Activated CD4-positive, alpha-beta memory T cell treated with anti-CD3 and anti-CD28 coated beads, Interleukin-2, amount 10 ng/mL, durations not matched to agents 7 days and 5 days (primary cell): ENCODE measurements at regions of chr2 and their contacts with region 1.

Region 1: GRCh38 chr2:105521205-105521604 is 122.4 kb upstream of the FHL2 start:
- DNase-seq: no peak
- H3K4me3 Mint-ChIP-seq: no peak overlapping the region
- H3K27ac Mint-ChIP-seq: no peak overlapping the region
- H3K4me1 Mint-ChIP-seq: no peaks in the 10 kb centered on the region
- H3K27me3 Mint-ChIP-seq: peaks cover 1% of the 10 kb centered on the region

Region 2: DNA sequence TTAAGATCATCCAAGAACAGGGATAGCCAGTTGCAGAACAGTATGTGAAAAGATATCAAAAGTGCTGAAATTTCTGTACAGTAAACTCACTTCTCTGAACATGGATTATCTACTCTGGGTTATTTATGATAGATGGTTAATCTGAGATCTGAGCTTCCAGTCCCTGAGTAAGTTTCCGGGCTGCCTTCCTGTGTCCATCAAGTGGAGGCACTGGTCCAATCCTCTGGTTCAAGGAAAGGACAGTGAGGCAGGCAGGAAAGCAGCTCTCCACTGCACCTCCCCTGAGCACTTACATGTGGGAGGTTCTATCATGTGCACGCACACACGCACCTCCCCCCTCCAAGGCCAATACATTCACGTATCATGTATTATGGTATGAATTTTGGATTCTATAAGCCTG is 247.2 kb before region 1 on chr2:
- CTCF ChIA-PET with region 1: no interaction called
- POLR2A ChIA-PET with region 1: no interaction called
- DNase-seq: no peak
- H3K4me3 Mint-ChIP-seq: no peak overlapping the region
- H3K27ac Mint-ChIP-seq: no peak overlapping the region
- H3K4me1 Mint-ChIP-seq: no peaks in the 10 kb centered on the region
- H3K27me3 Mint-ChIP-seq: no peaks in the 10 kb centered on the region

Region 3: DNA sequence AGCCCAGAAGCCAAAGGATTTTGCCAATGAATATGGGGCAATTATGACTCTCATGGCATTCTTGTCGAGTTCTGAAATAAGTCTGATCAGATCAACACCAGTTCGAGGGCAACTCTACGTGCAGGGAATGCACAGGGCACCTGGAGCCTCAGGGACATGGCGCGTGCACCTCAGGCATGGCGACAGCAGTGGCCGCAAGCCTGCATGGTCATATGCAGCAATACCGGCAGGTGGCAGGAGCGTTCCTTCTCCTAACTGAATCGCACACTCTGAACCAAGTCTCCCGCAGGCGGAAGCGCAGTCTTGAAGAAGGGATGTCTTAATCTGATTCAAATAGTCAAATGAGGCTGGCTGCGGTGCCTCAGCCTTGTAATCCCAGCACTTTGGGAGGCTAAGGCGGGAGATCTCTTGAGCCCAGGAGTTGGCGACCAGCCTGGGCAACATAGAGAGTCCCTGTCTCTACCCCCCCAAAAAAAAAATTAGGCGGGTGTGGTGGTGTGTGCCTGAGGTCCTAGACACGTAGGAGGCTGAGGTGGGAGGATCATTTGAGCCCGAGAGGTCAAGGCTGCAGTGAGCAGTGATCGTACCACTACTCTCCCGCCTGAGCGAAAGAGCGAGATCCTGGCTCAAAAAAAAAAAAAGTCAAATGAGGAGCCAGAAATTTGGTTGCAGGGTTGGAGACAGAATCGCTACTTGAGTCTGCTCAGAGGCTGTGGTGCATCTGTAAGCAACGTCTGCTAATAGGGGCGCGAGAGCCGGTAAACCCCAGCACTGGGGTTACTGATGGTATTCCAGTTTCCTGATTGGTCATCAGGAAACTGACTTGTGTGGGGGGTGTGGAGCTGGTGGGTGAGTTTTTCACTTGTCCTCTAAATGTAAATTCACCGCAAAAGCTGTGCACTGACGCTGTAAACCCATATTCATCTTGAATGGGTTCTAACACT is 151.2 kb before region 1 on chr2:
- CTCF ChIA-PET with region 1: interaction called, 41 read pairs
- POLR2A ChIA-PET with region 1: interaction called, 5 read pairs
- DNase-seq: peak; percentile 90
- H3K4me3 Mint-ChIP-seq: no peak overlapping the region
- H3K27ac Mint-ChIP-seq: peak overlapping the region; percentile 6
- H3K4me1 Mint-ChIP-seq: peaks cover 36% of the 10 kb centered on the region
- H3K27me3 Mint-ChIP-seq: peaks cover 2% of the 10 kb centered on the region

Region 4: GRCh38 chr2:105444219-105444598 is 77.0 kb before region 1 on chr2:
- CTCF ChIA-PET with region 1: no interaction called
- POLR2A ChIA-PET with region 1: no interaction called
- DNase-seq: no peak
- H3K4me3 Mint-ChIP-seq: no peak overlapping the region
- H3K27ac Mint-ChIP-seq: no peak overlapping the region
- H3K4me1 Mint-ChIP-seq: no peaks in the 10 kb centered on the region
- H3K27me3 Mint-ChIP-seq: peaks cover 17% of the 10 kb centered on the region

Region 5: GRCh38 chr2:105576440-105577252 is 55.4 kb after region 1 on chr2:
- CTCF ChIA-PET with region 1: interaction called, 10 read pairs
- POLR2A ChIA-PET with region 1: no interaction called
- DNase-seq: no peak
- H3K4me3 Mint-ChIP-seq: no peak overlapping the region
- H3K27ac Mint-ChIP-seq: peak overlapping the region; percentile 10
- H3K4me1 Mint-ChIP-seq: peaks cover 23% of the 10 kb centered on the region
- H3K27me3 Mint-ChIP-seq: peaks cover 7% of the 10 kb centered on the region